GM18951 (cell line): ENCODE measurements at regions of chr18 and their contacts with region 1.

Region 1: GRCh38 chr18:11149441-11150270 is at the start of gene PIEZO2:
- POLR2A ChIP-seq: peak; percentile 19

Region 2: DNA sequence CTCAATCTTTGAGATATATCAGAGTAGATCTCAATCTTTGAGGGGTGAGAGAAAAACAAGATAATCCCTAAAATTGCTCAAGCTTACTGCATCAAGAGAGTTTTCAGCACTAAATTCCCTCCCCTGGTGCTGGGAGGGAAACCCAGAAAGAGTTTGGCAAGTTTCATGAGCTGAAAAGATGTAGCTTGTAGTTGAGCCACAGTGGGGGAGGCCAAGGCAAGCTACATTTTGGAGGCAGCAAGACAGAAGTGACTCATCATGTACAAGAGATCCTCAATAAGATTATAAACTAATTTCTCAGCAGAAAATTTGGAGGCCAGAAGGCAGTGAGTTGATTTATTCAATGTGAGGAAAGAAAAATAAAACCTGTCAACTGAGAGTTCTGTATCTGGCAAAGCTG is 308.5 kb before region 1 on chr18:
- in situ Hi-C with region 1: loop called (anchors 25 kb)
- POLR2A ChIP-seq: no peak

Region 3: DNA sequence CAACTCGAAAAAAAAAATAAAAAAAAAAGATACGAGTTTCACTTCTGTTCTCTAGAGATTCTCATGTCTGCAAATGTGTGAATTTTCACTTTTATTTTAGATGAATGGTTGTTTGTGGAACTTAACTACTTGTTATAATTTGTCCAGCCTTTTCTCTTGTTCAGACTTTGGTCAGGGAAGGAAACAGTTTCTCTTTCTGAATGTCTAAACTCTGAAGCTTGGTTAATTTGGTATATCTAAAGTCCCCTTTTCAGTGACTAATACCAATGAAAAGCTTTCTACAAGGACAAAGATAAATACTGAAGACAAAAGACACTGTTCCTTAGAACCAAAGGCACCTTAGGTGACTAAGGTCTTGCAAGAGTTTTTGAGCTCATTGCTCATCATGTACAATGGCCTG is 144.1 kb after region 1 on chr18:
- in situ Hi-C with region 1: no loop called
- POLR2A ChIP-seq: no peak